ENCODE measurements at regions of chr5 and their contacts with region 1.

Region 1: DNA sequence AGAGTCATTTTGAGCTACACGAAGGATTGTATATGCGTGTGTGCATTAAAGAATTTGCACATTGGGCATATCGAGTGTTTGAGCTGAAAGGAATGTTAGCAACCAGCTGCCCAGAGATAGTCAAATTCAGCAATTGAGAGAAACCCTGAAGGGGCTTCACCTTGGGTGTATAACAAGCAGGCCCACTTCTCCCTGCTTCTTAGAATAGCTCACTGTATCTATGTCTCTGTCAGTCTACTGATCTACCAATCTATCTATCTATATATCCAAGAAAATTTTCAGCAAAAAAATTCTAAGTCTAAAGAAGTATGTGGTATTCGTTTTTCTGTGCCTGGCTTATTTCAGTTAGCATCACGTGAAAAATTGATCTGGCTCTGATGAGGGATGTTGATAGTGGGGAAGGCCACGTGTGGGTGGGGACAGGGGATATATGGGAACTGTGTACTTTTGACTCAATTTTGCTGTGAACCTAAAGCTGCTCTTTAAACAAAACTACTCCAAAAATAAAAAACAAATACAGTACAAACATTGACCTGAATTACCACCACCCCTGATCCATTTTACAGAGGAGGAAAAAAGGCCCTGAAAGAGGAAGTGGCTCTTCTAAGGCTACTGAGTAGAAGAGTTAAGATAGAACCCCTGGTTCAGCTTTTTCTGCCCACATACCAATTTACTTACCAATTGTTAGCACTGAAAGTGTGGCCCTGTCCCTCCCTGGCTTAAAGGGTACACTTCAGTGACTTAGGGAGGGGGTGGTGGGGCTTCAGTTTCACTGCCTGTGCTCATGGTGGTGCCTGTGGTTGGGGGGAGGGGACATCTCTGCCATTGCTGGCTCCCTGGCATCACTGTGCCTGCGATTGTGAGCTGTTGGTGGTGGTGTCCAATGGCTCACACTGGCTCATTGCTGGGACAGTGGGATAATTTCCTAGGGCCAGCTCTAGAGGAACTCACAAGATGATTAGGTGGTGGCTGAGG is 141.8 kb downstream of the DOCK2 start:
- DNase-seq: peak; percentile 87
- ATAC-seq: peak; percentile 97
- H3K4me3 ChIP-seq: no peak overlapping the region
- H3K27ac ChIP-seq: peak overlapping the region; percentile 80
- H3K4me1 ChIP-seq: peaks cover 29% of the 10 kb centered on the region
- H3K27me3 ChIP-seq: no peaks in the 10 kb centered on the region
- CTCF ChIP-seq: no peak
- EP300 ChIP-seq: peak; percentile 60 to 82; a peak in 2 of 4 replicates
- POLR2A ChIP-seq: no peak
- RAD21 ChIP-seq: no peak

Region 2: DNA sequence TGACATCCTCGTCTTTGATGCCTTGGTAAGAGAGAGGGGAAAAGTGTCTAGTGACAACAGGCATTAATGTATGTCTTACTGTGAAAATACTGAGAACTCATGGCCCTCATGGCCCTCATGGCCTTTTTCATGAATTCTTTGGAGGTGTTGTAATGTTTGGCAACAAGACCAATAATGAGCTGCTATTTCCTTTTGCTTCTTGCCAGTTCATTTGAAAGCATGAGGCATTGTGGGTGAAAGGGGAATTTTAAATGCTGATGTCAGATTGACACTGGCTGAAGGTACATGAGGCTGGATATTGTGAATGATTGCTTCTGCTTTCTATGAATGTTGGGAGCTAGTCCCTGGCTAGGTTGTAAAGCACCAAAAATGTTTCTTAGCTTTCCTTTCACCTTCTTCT is 62.6 kb before region 1 on chr5:
- CTCF ChIA-PET with region 1: no interaction called
- POLR2A ChIA-PET with region 1: interaction called, 4 read pairs
- RAD21 ChIA-PET with region 1: interaction called, 43 read pairs
- SMC1A ChIA-PET with region 1: interaction called, 21 read pairs
- in situ Hi-C with region 1: no loop called
- intact Hi-C with region 1: no loop called
- DNase-seq: no peak
- ATAC-seq: peak; percentile 11; the same call in 2 of the 3 replicates
- H3K4me3 ChIP-seq: no peak overlapping the region
- H3K27ac ChIP-seq: peak overlapping the region; percentile 22
- H3K4me1 ChIP-seq: peaks cover 17% of the 10 kb centered on the region
- H3K27me3 ChIP-seq: no peaks in the 10 kb centered on the region
- CTCF ChIP-seq: no peak
- EP300 ChIP-seq: no peak; a peak in 1 of 4 replicates
- POLR2A ChIP-seq: no peak
- RAD21 ChIP-seq: no peak

Region 3: DNA sequence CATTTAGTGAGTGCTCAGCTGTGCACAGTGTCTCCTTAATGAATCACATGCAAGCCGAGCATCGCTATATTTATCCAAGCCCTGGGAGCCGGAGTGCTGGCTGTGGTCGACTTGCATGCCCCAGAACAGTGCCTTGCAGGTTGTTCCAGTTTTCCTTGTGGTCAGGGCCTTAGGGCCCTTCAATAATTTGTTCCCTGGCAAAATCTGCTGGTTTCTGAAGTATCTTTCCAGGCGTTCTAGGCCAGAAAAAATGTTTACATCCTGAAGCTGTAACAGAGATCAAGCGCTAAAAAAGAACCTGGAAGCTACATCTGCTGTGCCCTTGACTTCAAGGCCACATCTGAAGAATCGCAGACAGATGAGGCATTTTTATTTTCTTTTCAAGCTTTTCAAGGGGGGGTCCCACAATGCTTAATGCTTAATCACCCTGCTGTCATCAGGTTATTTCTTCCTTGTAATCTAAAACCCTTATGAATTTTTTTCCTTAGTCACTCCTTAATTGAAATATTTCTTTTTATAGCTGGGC is 36.1 kb before region 1 on chr5:
- CTCF ChIA-PET with region 1: interaction called, 3 read pairs
- POLR2A ChIA-PET with region 1: interaction called, 5 read pairs
- RAD21 ChIA-PET with region 1: interaction called, 20 read pairs
- SMC1A ChIA-PET with region 1: interaction called, 10 read pairs
- in situ Hi-C with region 1: no loop called
- intact Hi-C with region 1: no loop called
- DNase-seq: no peak
- ATAC-seq: no peak
- H3K4me3 ChIP-seq: no peak overlapping the region
- H3K27ac ChIP-seq: no peak overlapping the region
- H3K4me1 ChIP-seq: peaks cover 9% of the 10 kb centered on the region
- H3K27me3 ChIP-seq: no peaks in the 10 kb centered on the region
- CTCF ChIP-seq: no peak
- EP300 ChIP-seq: no peak
- POLR2A ChIP-seq: no peak
- RAD21 ChIP-seq: no peak

Region 4: DNA sequence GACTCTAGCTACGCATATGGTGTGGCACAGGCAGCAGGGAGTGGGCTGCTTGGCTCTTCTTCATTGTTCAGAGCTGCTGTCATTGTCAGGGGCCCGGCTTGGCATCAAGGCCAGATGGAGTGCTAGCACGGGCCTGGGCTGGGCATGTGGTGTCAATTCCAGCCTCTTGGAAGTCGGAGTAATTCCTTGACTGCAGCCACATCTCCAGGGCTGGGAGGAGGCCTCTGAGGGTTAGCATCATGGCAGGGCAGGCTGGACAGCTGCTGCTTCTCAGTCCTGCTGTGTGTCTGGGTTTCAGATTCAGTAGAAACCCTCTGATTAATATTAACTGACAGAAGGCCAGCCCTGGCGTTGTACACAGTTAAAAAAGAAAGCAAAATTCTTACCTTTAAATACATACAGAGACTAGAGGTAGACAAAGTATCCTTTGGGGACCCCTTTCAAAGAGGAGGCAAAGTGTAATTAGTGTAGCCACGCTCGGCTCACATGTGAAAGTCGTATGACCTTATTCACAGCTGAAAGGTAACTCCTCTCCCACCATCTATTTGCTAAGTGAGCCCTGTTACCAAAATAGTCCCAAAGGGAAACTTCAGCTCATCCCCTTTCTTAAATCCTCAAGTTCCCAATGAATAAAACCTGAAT is 15.4 kb before region 1 on chr5:
- CTCF ChIA-PET with region 1: interaction called, 9 read pairs
- POLR2A ChIA-PET with region 1: interaction called, 12 read pairs
- RAD21 ChIA-PET with region 1: interaction called, 43 read pairs
- SMC1A ChIA-PET with region 1: interaction called, 106 read pairs
- in situ Hi-C with region 1: no loop called
- intact Hi-C with region 1: no loop called
- DNase-seq: peak; percentile 45
- ATAC-seq: peak; percentile 87
- H3K4me3 ChIP-seq: no peak overlapping the region
- H3K27ac ChIP-seq: no peak overlapping the region
- H3K4me1 ChIP-seq: peaks cover 5% of the 10 kb centered on the region; the same call in 1 of the 2 replicates
- H3K27me3 ChIP-seq: no peaks in the 10 kb centered on the region
- CTCF ChIP-seq: no peak
- EP300 ChIP-seq: 0 out of 4 replicates have a peak, but pooled peaks of 1 of the 2 experiments have one; percentile 19
- POLR2A ChIP-seq: no peak
- RAD21 ChIP-seq: no peak

Region 5: DNA sequence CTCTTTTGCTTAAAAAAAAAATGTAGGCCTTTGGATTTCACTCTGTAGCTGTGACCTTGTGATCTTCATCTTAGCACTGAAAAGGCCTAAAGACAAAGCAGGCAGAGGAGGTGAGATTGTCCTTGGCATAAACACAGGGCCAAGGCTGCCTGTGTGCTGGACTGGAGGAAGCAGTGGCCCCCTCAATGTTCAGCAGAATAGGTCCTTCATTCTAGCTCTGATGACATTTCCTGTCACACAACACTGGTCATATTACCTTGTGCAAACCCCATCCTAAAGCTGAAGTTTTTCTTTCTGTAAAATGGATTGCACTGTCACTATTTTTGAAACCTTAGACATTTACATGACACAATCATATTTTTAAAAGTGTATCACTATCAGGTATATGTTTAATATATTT is 53.9 kb after region 1 on chr5:
- CTCF ChIA-PET with region 1: interaction called, 3 read pairs
- POLR2A ChIA-PET with region 1: interaction called, 3 read pairs
- RAD21 ChIA-PET with region 1: interaction called, 11 read pairs
- SMC1A ChIA-PET with region 1: interaction called, 7 read pairs
- in situ Hi-C with region 1: no loop called
- intact Hi-C with region 1: no loop called
- DNase-seq: no peak
- ATAC-seq: peak; percentile 60
- H3K4me3 ChIP-seq: no peak overlapping the region
- H3K27ac ChIP-seq: peak overlapping the region; percentile 7
- H3K4me1 ChIP-seq: peaks cover 22% of the 10 kb centered on the region
- H3K27me3 ChIP-seq: no peaks in the 10 kb centered on the region
- CTCF ChIP-seq: no peak
- EP300 ChIP-seq: no peak
- POLR2A ChIP-seq: no peak
- RAD21 ChIP-seq: no peak

Region 6: DNA sequence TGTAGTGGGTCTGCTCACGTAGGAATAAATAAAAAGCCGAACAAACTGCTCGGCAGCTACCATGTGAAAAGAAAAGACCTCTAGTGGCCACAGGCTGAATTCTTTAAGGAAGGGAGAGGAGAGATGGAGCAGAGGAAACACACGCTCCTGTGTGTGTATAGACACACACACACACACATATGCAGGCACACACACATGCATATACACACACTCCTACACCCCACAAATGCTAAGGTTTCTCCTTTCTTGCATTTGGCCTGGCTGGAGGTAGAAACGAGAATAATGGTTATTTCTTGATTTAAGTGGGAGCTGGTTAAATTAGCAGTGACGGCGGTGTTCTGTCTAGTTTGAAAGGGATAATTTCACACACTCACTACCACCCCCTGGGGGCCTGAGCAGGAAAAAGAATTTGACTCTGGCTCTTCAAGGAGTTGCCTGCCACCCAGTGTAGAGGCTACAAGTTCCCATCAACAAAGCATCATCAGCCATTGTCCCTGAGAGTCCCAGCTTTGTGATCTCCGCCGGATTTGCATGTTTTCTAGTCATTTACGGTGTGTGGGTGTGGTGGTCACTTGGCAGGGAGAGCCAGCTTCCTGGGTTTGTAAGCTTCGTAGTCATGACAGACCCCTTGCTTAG is 201.6 kb after region 1 on chr5 and contains the start of gene INSYN2B:
- CTCF ChIA-PET with region 1: interaction called, 6 read pairs
- POLR2A ChIA-PET with region 1: interaction called, 3 read pairs
- RAD21 ChIA-PET with region 1: interaction called, 10 read pairs
- SMC1A ChIA-PET with region 1: interaction called, 3 read pairs
- in situ Hi-C with region 1: no loop called
- intact Hi-C with region 1: no loop called
- DNase-seq: no peak
- ATAC-seq: peak; percentile 90
- H3K4me3 ChIP-seq: no peak within 1 kb of the TSS
- H3K27ac ChIP-seq: no peak within 1 kb of the TSS
- H3K4me1 ChIP-seq: peaks cover 4% of the 10 kb centered on the region; the same call in 1 of the 2 replicates
- H3K27me3 ChIP-seq: no peaks in the 10 kb centered on the region
- CTCF ChIP-seq: peak in 2 of 3 experiments; percentile 33 to 71; a peak in 3 of 6 replicates
- EP300 ChIP-seq: no peak
- POLR2A ChIP-seq: no peak
- RAD21 ChIP-seq: peak; percentile 67
- polyA plus RNA-seq, gene INSYN2B: 0.05 TPM in 1 of 2 experiments, not detected in the other

Measured in GM12878 (cell line).